GM12878 (cell line): ENCODE measurements at regions of chr1 and their contacts with region 1.

Region 1: GRCh38 chr1:211514030-211514754 is 22.2 kb upstream of the RD3 start:
- DNase-seq: no peak
- ATAC-seq: peak; percentile 83
- H3K4me3 ChIP-seq: no peak overlapping the region
- H3K27ac ChIP-seq: no peak overlapping the region
- H3K4me1 ChIP-seq: peaks cover 41% of the 10 kb centered on the region
- H3K27me3 ChIP-seq: no peaks in the 10 kb centered on the region; a peak in 1 of 4 replicates
- CTCF ChIP-seq: peak; percentile 80 to 90 (median 82)
- EP300 ChIP-seq: no peak
- POLR2A ChIP-seq: no peak
- RAD21 ChIP-seq: peak; percentile 87

Region 2: GRCh38 chr1:211382714-211383480 is 131.3 kb before region 1 on chr1:
- CTCF ChIA-PET with region 1: interaction called, 3 read pairs
- POLR2A ChIA-PET with region 1: no interaction called
- RAD21 ChIA-PET with region 1: no interaction called
- SMC1A ChIA-PET with region 1: no interaction called
- in situ Hi-C with region 1: no loop called
- intact Hi-C with region 1: loop called (anchors 5 kb)
- DNase-seq: peak; percentile 80
- ATAC-seq: peak; percentile 98
- H3K4me3 ChIP-seq: peak overlapping the region; percentile 76
- H3K27ac ChIP-seq: peak overlapping the region; percentile 95
- H3K4me1 ChIP-seq: peaks cover 4% of the 10 kb centered on the region; the same call in 1 of the 2 replicates
- H3K27me3 ChIP-seq: no peaks in the 10 kb centered on the region
- CTCF ChIP-seq: no peak
- EP300 ChIP-seq: no peak; a peak in 1 of 4 replicates
- POLR2A ChIP-seq: peak; percentile 98
- RAD21 ChIP-seq: no peak

Region 3: GRCh38 chr1:211476200-211476849 is 37.9 kb before region 1 on chr1:
- CTCF ChIA-PET with region 1: interaction called, 20 read pairs
- POLR2A ChIA-PET with region 1: interaction called, 3 read pairs
- RAD21 ChIA-PET with region 1: interaction called, 15 read pairs
- SMC1A ChIA-PET with region 1: interaction called, 47 read pairs
- in situ Hi-C with region 1: no loop called
- intact Hi-C with region 1: no loop called
- DNase-seq: peak; percentile 20
- ATAC-seq: peak; percentile 96
- H3K4me3 ChIP-seq: no peak overlapping the region
- H3K27ac ChIP-seq: no peak overlapping the region
- H3K4me1 ChIP-seq: no peaks in the 10 kb centered on the region
- H3K27me3 ChIP-seq: peaks cover 1 to 7% of the 10 kb centered on the region in 2 experiments; a peak in 2 of 4 replicates
- CTCF ChIP-seq: peak; percentile 84 to 91 (median 90)
- EP300 ChIP-seq: no peak
- POLR2A ChIP-seq: no peak
- RAD21 ChIP-seq: peak; percentile 75

Region 4: DNA sequence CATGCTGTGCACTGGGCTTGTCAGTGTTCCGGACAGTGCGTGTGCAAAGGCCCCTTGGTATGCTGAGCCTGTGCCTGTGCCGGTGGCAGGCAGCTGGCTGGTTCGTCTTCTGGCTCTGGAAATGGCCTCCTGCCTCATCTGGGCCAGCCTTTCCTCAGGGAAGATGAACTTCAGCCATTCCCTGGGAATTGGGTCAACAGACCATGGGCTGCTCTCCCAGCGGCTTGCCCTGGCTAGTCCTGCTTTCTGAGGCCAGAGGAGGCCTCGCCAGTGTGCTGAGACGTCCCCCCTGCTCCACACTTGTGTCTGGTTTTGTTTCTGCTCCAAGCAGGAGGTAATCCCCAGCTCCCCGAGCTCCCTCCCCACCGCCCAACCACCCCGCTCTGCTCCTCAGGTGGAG is 10.3 kb after region 1 on chr1:
- CTCF ChIA-PET with region 1: interaction called, 12 read pairs
- POLR2A ChIA-PET with region 1: interaction called, 4 read pairs
- RAD21 ChIA-PET with region 1: interaction called, 3 read pairs
- SMC1A ChIA-PET with region 1: interaction called, 3 read pairs
- in situ Hi-C with region 1: no loop called
- intact Hi-C with region 1: no loop called
- DNase-seq: no peak
- ATAC-seq: no peak
- H3K4me3 ChIP-seq: no peak overlapping the region
- H3K27ac ChIP-seq: no peak overlapping the region
- H3K4me1 ChIP-seq: peaks cover 51% of the 10 kb centered on the region
- H3K27me3 ChIP-seq: no peaks in the 10 kb centered on the region
- CTCF ChIP-seq: no peak
- EP300 ChIP-seq: no peak
- POLR2A ChIP-seq: no peak
- RAD21 ChIP-seq: no peak

Region 5: GRCh38 chr1:211578640-211579433 is 64.6 kb after region 1 on chr1 and contains the start of gene SLC30A1:
- CTCF ChIA-PET with region 1: interaction called, 15 read pairs
- POLR2A ChIA-PET with region 1: interaction called, 5 read pairs
- RAD21 ChIA-PET with region 1: interaction called, 4 read pairs
- SMC1A ChIA-PET with region 1: interaction called, 10 read pairs
- in situ Hi-C with region 1: no loop called
- intact Hi-C with region 1: loop called (anchors 2 kb)
- DNase-seq: peak; percentile 83
- ATAC-seq: peak; percentile 87
- H3K4me3 ChIP-seq: peak within 1 kb of the TSS; percentile 96
- H3K27ac ChIP-seq: peak within 1 kb of the TSS; percentile 84
- H3K4me1 ChIP-seq: peaks cover 23% of the 10 kb centered on the region
- H3K27me3 ChIP-seq: no peaks in the 10 kb centered on the region
- CTCF ChIP-seq: no peak
- EP300 ChIP-seq: peak in 1 of 2 experiments; percentile 27; a peak in 1 of 4 replicates
- POLR2A ChIP-seq: peak; percentile 91
- RAD21 ChIP-seq: no peak
- polyA plus RNA-seq, gene SLC30A1: 3.5 to 4.0 TPM

Region 6: GRCh38 chr1:211648980-211649934 is 135.1 kb after region 1 on chr1:
- CTCF ChIA-PET with region 1: interaction called, 37 read pairs
- POLR2A ChIA-PET with region 1: no interaction called
- RAD21 ChIA-PET with region 1: interaction called, 14 read pairs
- SMC1A ChIA-PET with region 1: interaction called, 21 read pairs
- in situ Hi-C with region 1: loop called (anchors 5 kb)
- intact Hi-C with region 1: no loop called
- DNase-seq: no peak
- ATAC-seq: peak; percentile 89
- H3K4me3 ChIP-seq: no peak overlapping the region
- H3K27ac ChIP-seq: no peak overlapping the region
- H3K4me1 ChIP-seq: no peaks in the 10 kb centered on the region
- H3K27me3 ChIP-seq: peaks cover 0 to 2% of the 10 kb centered on the region in 2 experiments; a peak in 1 of 4 replicates
- CTCF ChIP-seq: peak; percentile 57 to 65 (median 60)
- EP300 ChIP-seq: no peak
- POLR2A ChIP-seq: no peak
- RAD21 ChIP-seq: peak; percentile 58

Region 7: DNA sequence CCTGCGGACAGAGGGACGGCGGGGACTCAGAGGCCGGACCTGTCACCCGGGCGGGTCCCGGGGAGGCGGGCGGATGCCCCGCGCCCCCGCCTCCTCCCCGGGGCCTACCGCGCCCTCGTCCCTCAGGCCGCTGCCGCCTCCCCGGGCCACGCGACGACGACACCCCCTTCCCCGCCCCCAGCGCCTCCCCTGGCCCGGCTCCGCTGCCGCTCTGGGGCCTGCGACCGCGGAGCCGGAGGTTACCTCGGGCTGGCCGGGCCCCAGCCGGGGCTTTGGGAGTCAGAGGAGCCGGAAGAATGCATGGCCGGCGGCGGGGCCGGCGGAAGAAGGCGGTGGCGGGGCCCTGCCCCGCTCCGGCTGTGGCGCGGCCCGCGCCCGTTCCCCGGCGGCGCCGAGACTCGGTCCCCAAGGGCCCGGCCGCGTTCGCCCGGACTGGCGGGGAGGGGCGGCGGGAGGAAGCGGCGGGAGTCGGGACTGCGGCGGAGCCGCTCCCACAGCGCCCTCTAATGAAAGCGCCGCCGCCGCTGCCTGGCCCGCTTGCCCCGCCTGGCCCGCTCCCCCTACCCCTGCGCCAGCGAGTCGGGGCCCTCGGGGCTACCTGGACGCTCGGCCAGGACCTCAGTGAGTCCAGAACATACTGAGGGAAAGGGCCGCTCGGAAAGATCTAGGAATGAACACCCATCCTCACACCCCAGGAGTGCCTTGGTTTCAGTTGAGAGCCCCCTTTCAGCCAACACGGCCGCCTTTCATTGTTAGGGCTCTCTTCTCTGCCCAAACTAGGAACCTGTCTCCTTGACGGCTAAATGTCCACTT is 316.3 kb after region 1 on chr1 and contains the start of gene LPGAT1:
- CTCF ChIA-PET with region 1: no interaction called
- POLR2A ChIA-PET with region 1: no interaction called
- RAD21 ChIA-PET with region 1: no interaction called
- SMC1A ChIA-PET with region 1: no interaction called
- in situ Hi-C with region 1: no loop called
- intact Hi-C with region 1: no loop called
- DNase-seq: no peak
- ATAC-seq: peak; percentile 82
- H3K4me3 ChIP-seq: peak within 1 kb of the TSS; percentile 98
- H3K27ac ChIP-seq: peak within 1 kb of the TSS; percentile 85
- H3K4me1 ChIP-seq: peaks cover 28% of the 10 kb centered on the region
- H3K27me3 ChIP-seq: no peaks in the 10 kb centered on the region
- CTCF ChIP-seq: peak; percentile 50 to 63 (median 53); a peak in 5 of 6 replicates
- EP300 ChIP-seq: no peak
- POLR2A ChIP-seq: peak; percentile 75
- RAD21 ChIP-seq: peak; percentile 25; the same call in 1 of the 2 replicates
- polyA plus RNA-seq, gene LPGAT1: 5.8 to 6.4 TPM